ENCODE measurements at regions of chr10 and their contacts with region 1.

Region 1: GRCh38 chr10:24929056-24929544 is 23.3 kb downstream of the PRTFDC1 start:
- DNase-seq: no peak
- ATAC-seq: no peak
- H3K4me3 ChIP-seq: no peak overlapping the region
- H3K4me3 Mint-ChIP-seq: no peak overlapping the region
- H3K27ac ChIP-seq: no peak overlapping the region
- H3K27ac Mint-ChIP-seq: no peak overlapping the region
- H3K4me1 ChIP-seq: peaks cover 17% of the 10 kb centered on the region
- H3K4me1 Mint-ChIP-seq: peaks cover 33% of the 10 kb centered on the region
- H3K27me3 ChIP-seq: no peaks in the 10 kb centered on the region
- H3K27me3 Mint-ChIP-seq: no peaks in the 10 kb centered on the region
- CTCF ChIP-seq: no peak

Region 2: GRCh38 chr10:24894309-24894708 is 34.8 kb before region 1 on chr10:
- CTCF ChIA-PET with region 1: interaction called, 3 read pairs
- POLR2A ChIA-PET with region 1: no interaction called
- intact Hi-C with region 1: loop called in 1 of 2 experiments (anchors 5 kb)
- DNase-seq: peak in 3 of 9 experiments; percentile 18 to 46 (median 20)
- ATAC-seq: peak; percentile 38
- H3K4me3 ChIP-seq: peak overlapping the region in 1 of 2 experiments; percentile 25
- H3K4me3 Mint-ChIP-seq: peak overlapping the region; percentile 78
- H3K27ac ChIP-seq: peak overlapping the region; percentile 2 to 75
- H3K27ac Mint-ChIP-seq: peak overlapping the region; percentile 97
- H3K4me1 ChIP-seq: peaks cover 40% of the 10 kb centered on the region
- H3K4me1 Mint-ChIP-seq: peaks cover 68% of the 10 kb centered on the region
- H3K27me3 ChIP-seq: no peaks in the 10 kb centered on the region
- H3K27me3 Mint-ChIP-seq: no peaks in the 10 kb centered on the region
- CTCF ChIP-seq: no peak